CD4-positive, alpha-beta T cell (primary cell): ENCODE measurements at regions of chr10 and their contacts with region 1.

Region 1: GRCh38 chr10:62050893-62051433 is 149.5 kb downstream of the ARID5B start:
- DNase-seq: peak; percentile 54 to 93 (median 72)
- ATAC-seq: peak; percentile 81
- H3K4me3 ChIP-seq: peak overlapping the region; percentile 60
- H3K4me3 Mint-ChIP-seq: peak overlapping the region; percentile 83
- H3K27ac ChIP-seq: peak overlapping the region; percentile 83 to 87
- H3K27ac Mint-ChIP-seq: peak overlapping the region; percentile 91
- H3K4me1 ChIP-seq: peaks cover 64% of the 10 kb centered on the region
- H3K4me1 Mint-ChIP-seq: peaks cover 97% of the 10 kb centered on the region
- H3K27me3 ChIP-seq: no peaks in the 10 kb centered on the region
- H3K27me3 Mint-ChIP-seq: no peaks in the 10 kb centered on the region
- CTCF ChIP-seq: no peak

Region 2: DNA sequence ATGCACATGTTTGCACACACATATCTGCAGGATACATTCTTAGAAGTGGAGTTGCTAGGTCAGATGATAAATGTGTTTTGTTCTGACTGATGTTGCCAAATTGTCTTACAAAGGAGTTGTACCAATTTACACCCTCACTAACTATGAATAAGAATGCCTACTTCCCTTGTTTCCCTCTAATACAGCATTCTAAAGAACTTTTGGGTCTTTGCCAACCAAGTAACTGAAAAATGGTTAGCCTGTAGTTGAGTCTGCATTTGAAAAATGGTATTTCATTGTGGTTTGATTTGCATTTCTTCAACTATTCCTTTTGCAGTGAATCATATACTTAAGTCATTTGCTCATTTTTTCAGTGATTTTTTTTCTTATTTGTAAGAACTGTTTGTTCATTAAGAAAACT is 646.2 kb before region 1 on chr10:
- CTCF ChIA-PET with region 1: no interaction called
- POLR2A ChIA-PET with region 1: no interaction called
- intact Hi-C with region 1: no loop called
- DNase-seq: no peak
- ATAC-seq: no peak
- H3K4me3 ChIP-seq: no peak overlapping the region
- H3K4me3 Mint-ChIP-seq: no peak overlapping the region
- H3K27ac ChIP-seq: no peak overlapping the region
- H3K27ac Mint-ChIP-seq: no peak overlapping the region
- H3K4me1 ChIP-seq: no peaks in the 10 kb centered on the region
- H3K4me1 Mint-ChIP-seq: no peaks in the 10 kb centered on the region
- H3K27me3 ChIP-seq: no peaks in the 10 kb centered on the region
- H3K27me3 Mint-ChIP-seq: no peaks in the 10 kb centered on the region
- CTCF ChIP-seq: no peak

Region 3: GRCh38 chr10:61943674-61944410 is 107.1 kb before region 1 on chr10:
- CTCF ChIA-PET with region 1: no interaction called
- POLR2A ChIA-PET with region 1: interaction called, 6 read pairs
- intact Hi-C with region 1: loop called in 1 of 2 experiments (anchors 2 kb)
- DNase-seq: peak in 5 of 14 experiments; percentile 9 to 79 (median 63)
- ATAC-seq: peak; percentile 73
- H3K4me3 ChIP-seq: peak overlapping the region; percentile 38
- H3K4me3 Mint-ChIP-seq: peak overlapping the region; percentile 59
- H3K27ac ChIP-seq: peak overlapping the region in 1 of 2 donors; percentile 71
- H3K27ac Mint-ChIP-seq: peak overlapping the region; percentile 82
- H3K4me1 ChIP-seq: peaks cover 12% of the 10 kb centered on the region
- H3K4me1 Mint-ChIP-seq: peaks cover 55% of the 10 kb centered on the region
- H3K27me3 ChIP-seq: no peaks in the 10 kb centered on the region
- H3K27me3 Mint-ChIP-seq: no peaks in the 10 kb centered on the region
- CTCF ChIP-seq: peak; percentile 22

Region 4: GRCh38 chr10:62076891-62077290 is 25.9 kb after region 1 on chr10:
- CTCF ChIA-PET with region 1: interaction called, 3 read pairs
- POLR2A ChIA-PET with region 1: interaction called, 19 read pairs
- intact Hi-C with region 1: loop called (anchors 2 kb)
- DNase-seq: peak in 4 of 14 experiments; percentile 19 to 42 (median 36)
- ATAC-seq: peak; percentile 75
- H3K4me3 ChIP-seq: no peak overlapping the region
- H3K4me3 Mint-ChIP-seq: peak overlapping the region; percentile 23
- H3K27ac ChIP-seq: peak overlapping the region in 1 of 2 donors; percentile 41
- H3K27ac Mint-ChIP-seq: peak overlapping the region; percentile 82
- H3K4me1 ChIP-seq: peaks cover 42% of the 10 kb centered on the region
- H3K4me1 Mint-ChIP-seq: peaks cover 78% of the 10 kb centered on the region
- H3K27me3 ChIP-seq: no peaks in the 10 kb centered on the region
- H3K27me3 Mint-ChIP-seq: no peaks in the 10 kb centered on the region
- CTCF ChIP-seq: peak; percentile 9

Region 5: DNA sequence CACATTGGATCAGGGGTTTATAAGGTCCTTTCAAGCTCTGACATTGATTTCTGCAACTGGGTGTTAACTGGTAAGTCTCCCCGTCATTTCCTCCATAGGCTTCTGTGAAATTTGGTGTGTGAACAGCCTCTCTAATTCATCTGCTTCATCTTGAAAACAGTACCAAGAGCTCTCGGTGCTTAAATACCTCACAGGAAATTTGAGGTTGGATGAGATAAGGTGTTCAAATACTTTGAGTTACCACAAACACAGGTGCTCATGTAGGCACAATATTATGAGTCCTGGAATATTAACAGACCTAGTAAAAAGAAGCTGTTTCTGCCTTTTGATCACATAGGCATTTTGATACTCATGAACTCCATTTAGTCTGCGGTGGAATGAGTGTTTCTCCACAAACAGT is 132.5 kb after region 1 on chr10:
- CTCF ChIA-PET with region 1: no interaction called
- POLR2A ChIA-PET with region 1: interaction called, 31 read pairs
- intact Hi-C with region 1: loop called in 1 of 2 experiments (anchors 1 kb)
- DNase-seq: peak in 10 of 14 experiments; percentile 16 to 92 (median 37)
- ATAC-seq: peak; percentile 85
- H3K4me3 ChIP-seq: no peak overlapping the region
- H3K4me3 Mint-ChIP-seq: peak overlapping the region; percentile 21
- H3K27ac ChIP-seq: peak overlapping the region; percentile 37 to 38
- H3K27ac Mint-ChIP-seq: peak overlapping the region; percentile 86
- H3K4me1 ChIP-seq: peaks cover 45% of the 10 kb centered on the region
- H3K4me1 Mint-ChIP-seq: peaks cover 91% of the 10 kb centered on the region
- H3K27me3 ChIP-seq: no peaks in the 10 kb centered on the region
- H3K27me3 Mint-ChIP-seq: no peaks in the 10 kb centered on the region
- CTCF ChIP-seq: no peak

Region 6: DNA sequence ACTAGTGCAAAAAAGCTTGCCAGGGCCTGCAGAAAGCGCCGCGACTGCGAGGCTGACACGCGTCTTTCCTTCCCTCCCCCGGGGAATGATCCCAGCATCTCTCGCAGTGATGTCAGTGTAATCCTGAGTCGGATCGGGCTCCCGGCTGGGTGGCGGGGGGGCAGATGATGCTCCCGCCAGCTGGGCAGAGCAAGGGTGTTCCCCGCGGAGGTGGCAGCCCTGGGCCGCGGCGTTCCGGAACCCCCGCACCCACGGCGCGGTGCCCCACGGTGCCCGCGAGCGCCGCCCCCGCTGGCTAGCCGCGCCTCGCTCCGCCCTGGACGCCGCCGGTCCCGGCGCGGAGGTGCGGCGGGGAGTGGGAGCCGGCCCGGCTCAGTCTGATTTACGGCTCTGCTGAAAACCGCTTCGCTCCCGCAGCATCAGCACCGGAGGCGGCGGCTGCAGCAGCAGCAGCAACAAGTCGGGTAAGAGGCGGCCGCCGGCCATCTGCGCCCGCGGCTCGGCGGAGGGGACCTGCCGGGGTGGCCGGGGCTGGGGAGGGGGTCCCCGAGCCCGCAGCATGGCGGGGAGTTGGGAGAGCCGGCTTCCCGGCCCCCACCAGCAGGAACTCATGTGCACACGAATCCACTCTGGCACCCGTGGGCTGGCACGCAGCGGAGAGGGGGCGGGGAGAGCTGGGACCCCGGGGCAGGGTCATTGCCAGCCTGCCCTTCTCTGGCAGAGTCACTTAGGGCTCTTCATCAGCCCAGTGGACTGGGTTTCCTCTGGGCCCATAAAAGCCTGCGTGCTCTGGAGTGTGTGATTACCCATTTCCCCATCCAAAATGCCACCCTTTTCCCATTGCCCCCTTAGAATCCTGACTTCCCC is 323.3 kb after region 1 on chr10 and contains the start of gene ZNF365:
- CTCF ChIA-PET with region 1: no interaction called
- POLR2A ChIA-PET with region 1: no interaction called
- intact Hi-C with region 1: loop called in 1 of 2 experiments (anchors 5 kb)
- DNase-seq: peak in 13 of 14 experiments; percentile 8 to 80 (median 29)
- ATAC-seq: peak; percentile 80
- H3K4me3 ChIP-seq: peak within 1 kb of the TSS; percentile 61
- H3K4me3 Mint-ChIP-seq: peak within 1 kb of the TSS; percentile 90
- H3K27ac ChIP-seq: no peak within 1 kb of the TSS
- H3K27ac Mint-ChIP-seq: peak within 1 kb of the TSS; percentile 42
- H3K4me1 ChIP-seq: peaks cover 19% of the 10 kb centered on the region
- H3K4me1 Mint-ChIP-seq: peaks cover 17% of the 10 kb centered on the region
- H3K27me3 ChIP-seq: peaks cover 3 to 10% of the 10 kb centered on the region in 2 experiments
- H3K27me3 Mint-ChIP-seq: peaks cover 40% of the 10 kb centered on the region
- CTCF ChIP-seq: no peak
- total RNA-seq, gene ZNF365: 1.8 to 2.0 TPM